Gastrocnemius medialis (tissue), 4 donors: ENCODE measurements at regions of chr2 and their contacts with region 1.

Region 1: GRCh38 chr2:108916796-108917421 is 72.1 kb downstream of the EDAR start:
- DNase-seq: no peak
- ATAC-seq: no peak
- H3K4me3 ChIP-seq: no peak overlapping the region
- H3K27ac ChIP-seq: no peak overlapping the region
- H3K4me1 ChIP-seq: no peaks in the 10 kb centered on the region
- H3K27me3 ChIP-seq: no peaks in the 10 kb centered on the region
- CTCF ChIP-seq: no peak
- POLR2A ChIP-seq: no peak

Region 2: GRCh38 chr2:108605947-108606346 is 311.0 kb before region 1 on chr2:
- in situ Hi-C with region 1: no loop called
- intact Hi-C with region 1: no loop called
- DNase-seq: no peak
- ATAC-seq: no peak
- H3K4me3 ChIP-seq: no peak overlapping the region
- H3K27ac ChIP-seq: no peak overlapping the region
- H3K4me1 ChIP-seq: peaks cover 17 to 43% of the 10 kb centered on the region in 2 donors
- H3K27me3 ChIP-seq: no peaks in the 10 kb centered on the region
- CTCF ChIP-seq: no peak
- POLR2A ChIP-seq: no peak

Region 3: DNA sequence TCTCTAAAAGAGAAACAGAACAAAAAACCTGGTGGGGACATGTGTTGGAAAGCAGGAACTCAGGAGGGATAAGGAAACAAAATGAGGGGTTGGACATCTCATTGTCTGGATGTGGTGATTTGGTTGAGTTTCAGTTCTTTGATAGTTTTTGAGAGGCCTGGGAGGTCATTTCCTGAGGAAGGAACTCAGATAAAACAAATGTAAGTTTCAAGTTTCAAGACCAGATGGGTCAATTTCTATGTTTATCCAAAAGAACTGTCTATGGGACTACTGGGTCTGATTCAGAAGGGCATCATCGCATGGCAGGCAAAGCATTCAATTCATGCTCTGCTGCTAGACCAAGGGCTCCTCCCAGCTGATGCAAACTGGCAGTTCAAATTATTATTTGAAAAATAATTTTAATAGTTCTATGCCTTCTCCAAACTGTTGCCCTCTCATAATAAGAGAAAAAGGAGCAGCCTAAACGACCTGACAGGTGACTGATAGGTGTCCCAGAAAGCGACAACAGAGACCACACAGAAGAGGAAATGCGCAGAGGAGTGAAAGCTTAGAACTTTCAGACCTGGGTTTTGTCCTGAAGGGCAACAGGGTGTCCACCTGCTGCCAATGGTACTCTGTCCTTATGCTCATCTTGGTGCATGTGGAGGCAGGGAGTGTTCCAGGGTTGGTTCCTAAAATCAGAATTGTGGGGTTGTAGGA is 172.8 kb after region 1 on chr2:
- in situ Hi-C with region 1: no loop called
- intact Hi-C with region 1: no loop called
- DNase-seq: no peak
- ATAC-seq: no peak
- H3K4me3 ChIP-seq: no peak overlapping the region
- H3K27ac ChIP-seq: no peak overlapping the region
- H3K4me1 ChIP-seq: no peaks in the 10 kb centered on the region
- H3K27me3 ChIP-seq: no peaks in the 10 kb centered on the region
- CTCF ChIP-seq: no peak
- POLR2A ChIP-seq: no peak

Region 4: DNA sequence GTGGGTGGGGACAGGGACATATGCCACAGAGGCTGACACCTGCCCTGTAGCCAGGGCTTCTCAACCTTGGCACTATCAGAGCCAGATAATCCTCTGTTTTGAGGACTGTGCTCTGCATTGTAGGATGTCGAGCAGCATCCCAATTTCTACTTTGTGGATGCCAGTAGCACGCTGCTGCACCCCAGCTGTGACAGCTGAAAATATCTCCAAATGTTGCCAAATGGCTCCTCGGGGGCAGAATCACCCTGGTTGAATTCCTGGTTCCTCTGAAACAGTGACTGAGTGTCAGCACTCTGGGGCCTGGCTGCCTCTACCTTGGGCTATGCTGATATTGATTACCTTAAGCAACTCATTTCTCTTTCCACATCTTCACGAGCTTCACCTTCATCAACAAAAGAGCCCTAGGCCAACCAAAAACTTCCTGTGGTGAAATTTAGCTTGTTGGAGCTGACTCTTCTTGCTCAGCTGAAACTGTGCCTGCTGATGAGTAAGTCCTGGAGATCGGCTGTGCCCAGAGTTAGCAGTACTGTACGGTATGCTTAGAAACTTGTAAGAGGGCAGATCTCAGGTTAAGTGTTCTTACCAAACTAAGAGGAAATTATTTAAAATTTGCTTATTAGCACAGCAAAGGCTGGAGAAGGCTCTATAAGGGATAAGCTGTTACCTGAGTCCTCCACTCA is 558.8 kb after region 1 on chr2:
- in situ Hi-C with region 1: no loop called
- intact Hi-C with region 1: loop called (anchors 10 kb)
- DNase-seq: no peak
- ATAC-seq: peak; percentile 43 to 70
- H3K4me3 ChIP-seq: no peak overlapping the region
- H3K27ac ChIP-seq: peak overlapping the region in 1 of 4 donors; percentile 33
- H3K4me1 ChIP-seq: peaks cover 10 to 13% of the 10 kb centered on the region in 2 donors
- H3K27me3 ChIP-seq: no peaks in the 10 kb centered on the region
- CTCF ChIP-seq: no peak
- POLR2A ChIP-seq: no peak